PC-3 (cell line): ENCODE measurements at regions of chr3 and their contacts with region 1.

Region 1: DNA sequence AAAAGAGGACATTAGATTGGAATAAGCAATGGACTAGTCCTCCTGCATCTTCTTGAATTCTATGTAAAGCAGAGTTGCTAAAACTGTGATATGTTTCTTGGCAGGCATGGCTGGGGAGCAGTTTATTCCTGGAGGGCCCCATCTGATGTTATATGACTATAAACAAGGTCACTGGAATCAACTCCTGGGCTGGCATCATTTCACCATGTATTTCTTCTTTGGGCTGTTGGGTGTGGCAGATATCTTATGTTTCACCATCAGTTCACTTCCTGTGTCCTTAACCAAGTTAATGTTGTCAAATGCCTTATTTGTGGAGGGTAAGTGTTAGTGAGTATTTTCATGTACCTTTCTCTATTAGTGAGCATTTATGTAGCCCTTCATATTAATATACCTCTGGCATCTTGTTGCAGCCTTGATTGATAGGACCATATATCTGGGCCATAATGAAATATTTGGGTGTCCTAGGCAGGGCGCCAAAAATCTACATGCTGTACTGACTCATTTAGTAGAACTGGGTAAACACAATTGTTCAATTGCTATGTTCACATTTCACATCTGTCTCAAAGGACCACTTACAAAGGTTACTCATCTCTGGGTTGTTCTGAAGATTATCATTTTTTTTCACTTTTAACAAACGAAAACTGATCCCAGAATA is 52.6 kb upstream of the ADGRG7 start:
- DNase-seq: peak; percentile 87
- ATAC-seq: peak; percentile 72
- H3K4me3 ChIP-seq: no peak overlapping the region
- H3K27ac ChIP-seq: peak overlapping the region; percentile 60
- H3K4me1 ChIP-seq: peaks cover 50% of the 10 kb centered on the region
- H3K27me3 ChIP-seq: no peaks in the 10 kb centered on the region
- CTCF ChIP-seq: no peak

Region 2: DNA sequence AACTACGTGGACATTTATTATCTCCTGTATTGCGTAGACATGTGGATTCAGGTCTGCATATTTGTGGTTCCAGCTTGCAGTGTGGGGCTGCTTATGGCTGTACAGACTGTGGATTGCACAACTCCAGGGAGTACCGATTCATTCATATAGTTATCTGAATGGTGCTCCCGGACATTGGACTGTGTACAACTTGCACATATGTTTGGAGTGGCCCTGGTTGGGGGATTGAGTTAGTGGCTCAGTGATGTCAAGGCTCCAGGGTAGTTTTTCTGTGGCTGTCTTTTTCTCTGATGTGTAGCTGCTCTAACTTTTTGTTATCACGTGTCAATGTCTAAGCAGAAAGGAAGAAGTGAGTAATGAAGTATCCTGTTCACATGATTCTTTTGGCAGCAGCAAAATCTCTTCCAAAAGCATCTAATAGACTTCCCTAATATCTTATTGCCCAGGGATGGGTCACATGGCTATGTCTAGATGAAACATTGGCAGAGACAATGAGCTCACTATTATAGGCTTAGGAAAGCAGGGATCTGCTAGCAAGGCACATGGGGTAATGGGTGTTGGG is 1777.8 kb before region 1 on chr3:
- CTCF ChIA-PET with region 1: no interaction called
- POLR2A ChIA-PET with region 1: no interaction called
- intact Hi-C with region 1: no loop called
- DNase-seq: no peak
- ATAC-seq: no peak
- H3K4me3 ChIP-seq: no peak overlapping the region
- H3K27ac ChIP-seq: no peak overlapping the region
- H3K4me1 ChIP-seq: peaks cover 4% of the 10 kb centered on the region; the same call in 1 of the 2 replicates
- H3K27me3 ChIP-seq: no peaks in the 10 kb centered on the region
- CTCF ChIP-seq: no peak

Region 3: GRCh38 chr3:100384733-100385525 is 171.9 kb before region 1 on chr3:
- CTCF ChIA-PET with region 1: no interaction called
- POLR2A ChIA-PET with region 1: no interaction called
- intact Hi-C with region 1: no loop called
- DNase-seq: no peak
- ATAC-seq: no peak
- H3K4me3 ChIP-seq: no peak overlapping the region
- H3K27ac ChIP-seq: no peak overlapping the region
- H3K4me1 ChIP-seq: peaks cover 20% of the 10 kb centered on the region
- H3K27me3 ChIP-seq: no peaks in the 10 kb centered on the region
- CTCF ChIP-seq: no peak

Region 4: DNA sequence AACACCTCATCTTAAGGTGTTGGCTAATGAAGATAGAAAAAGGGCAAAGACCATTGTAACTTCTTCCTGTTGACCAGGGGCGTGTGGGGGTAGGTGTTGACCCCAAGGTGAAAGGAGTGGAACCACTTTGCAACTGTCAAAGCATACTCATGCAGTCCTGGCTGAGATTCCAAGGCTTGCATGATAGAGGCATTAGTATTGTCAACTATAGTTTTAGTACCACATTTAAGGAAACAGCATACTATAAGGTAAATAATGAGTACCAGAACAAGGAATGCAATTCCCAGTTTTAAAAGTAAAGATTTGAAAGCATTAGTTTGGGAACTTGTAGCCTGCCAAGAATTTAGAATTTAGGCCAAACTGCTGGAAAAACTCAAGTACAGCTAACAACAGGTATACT is 24.9 kb after region 1 on chr3:
- CTCF ChIA-PET with region 1: no interaction called
- POLR2A ChIA-PET with region 1: no interaction called
- intact Hi-C with region 1: loop called (anchors 2 kb)
- DNase-seq: peak; percentile 82
- ATAC-seq: peak; percentile 86
- H3K4me3 ChIP-seq: peak overlapping the region; percentile 14; the same call in 1 of the 2 replicates
- H3K27ac ChIP-seq: peak overlapping the region; percentile 69
- H3K4me1 ChIP-seq: peaks cover 50% of the 10 kb centered on the region
- H3K27me3 ChIP-seq: no peaks in the 10 kb centered on the region
- CTCF ChIP-seq: no peak